IMR-90 (cell line): ENCODE measurements at regions of chr7 and their contacts with region 1.

Region 1: GRCh38 chr7:143263266-143264195 is at the start of gene GSTK1:
- DNase-seq: peak; percentile 54
- ATAC-seq: peak; percentile 99
- H3K4me3 ChIP-seq: peak within 1 kb of the TSS; percentile 97
- H3K27ac ChIP-seq: peak within 1 kb of the TSS; percentile 97
- H3K4me1 ChIP-seq: peaks cover 2% of the 10 kb centered on the region
- H3K27me3 ChIP-seq: no peaks in the 10 kb centered on the region
- CTCF ChIP-seq: no peak
- POLR2A ChIP-seq: no peak
- RAD21 ChIP-seq: no peak
- total RNA-seq, gene GSTK1: 60.0 and 64.9 TPM in 2 replicates

Region 2: DNA sequence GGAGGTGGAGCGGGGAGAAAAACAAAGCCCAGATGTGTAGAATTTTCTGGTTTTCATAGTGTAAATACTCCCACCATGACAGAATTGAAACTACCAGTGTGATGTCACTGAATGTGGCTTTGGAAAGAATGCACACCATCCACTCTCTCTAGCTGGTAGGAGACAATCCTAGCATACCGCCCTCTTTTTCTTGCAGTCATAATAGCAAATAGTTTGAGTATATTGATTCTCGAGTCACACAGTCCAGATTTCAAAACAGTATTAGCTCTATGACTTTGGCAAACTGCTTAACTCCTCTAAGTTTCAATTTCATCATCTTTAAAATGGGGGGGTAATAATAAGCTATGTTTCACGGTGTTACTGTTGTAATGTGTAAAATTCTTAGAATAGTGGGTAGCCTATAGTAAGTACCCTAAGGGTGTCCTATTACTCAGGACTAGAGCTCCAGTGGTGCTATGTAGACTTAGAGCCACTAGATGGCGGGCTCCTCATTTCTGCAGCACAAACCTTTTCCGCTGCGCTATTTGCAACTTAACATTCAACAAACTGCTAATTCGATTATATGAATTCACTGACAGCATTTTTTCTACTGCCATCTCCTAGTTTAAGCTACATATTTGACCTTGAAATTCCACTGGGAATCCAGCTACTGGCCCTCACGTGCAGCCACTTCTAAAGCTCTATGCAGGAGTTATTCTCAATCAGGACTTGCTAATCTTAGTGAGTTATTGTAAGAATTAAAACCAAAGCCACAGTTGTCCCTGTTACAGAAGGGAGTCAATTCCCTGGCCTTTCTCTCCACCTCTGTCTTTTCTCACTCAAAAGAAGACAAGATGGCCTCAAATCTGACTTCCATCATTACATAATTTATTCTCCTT is 23.0 kb before region 1 on chr7:
- CTCF ChIA-PET with region 1: interaction called, 10 read pairs
- POLR2A ChIA-PET with region 1: interaction called, 6 read pairs
- dilution Hi-C with region 1: no loop called
- in situ Hi-C with region 1: no loop called
- intact Hi-C with region 1: no loop called
- DNase-seq: peak; percentile 86
- ATAC-seq: peak; percentile 95
- H3K4me3 ChIP-seq: no peak overlapping the region
- H3K27ac ChIP-seq: no peak overlapping the region
- H3K4me1 ChIP-seq: peaks cover 4% of the 10 kb centered on the region; the same call in 1 of the 2 replicates
- H3K27me3 ChIP-seq: peaks cover 4% of the 10 kb centered on the region; the same call in 1 of the 2 replicates
- CTCF ChIP-seq: peak; percentile 91
- POLR2A ChIP-seq: no peak
- RAD21 ChIP-seq: peak; percentile 89

Region 3: DNA sequence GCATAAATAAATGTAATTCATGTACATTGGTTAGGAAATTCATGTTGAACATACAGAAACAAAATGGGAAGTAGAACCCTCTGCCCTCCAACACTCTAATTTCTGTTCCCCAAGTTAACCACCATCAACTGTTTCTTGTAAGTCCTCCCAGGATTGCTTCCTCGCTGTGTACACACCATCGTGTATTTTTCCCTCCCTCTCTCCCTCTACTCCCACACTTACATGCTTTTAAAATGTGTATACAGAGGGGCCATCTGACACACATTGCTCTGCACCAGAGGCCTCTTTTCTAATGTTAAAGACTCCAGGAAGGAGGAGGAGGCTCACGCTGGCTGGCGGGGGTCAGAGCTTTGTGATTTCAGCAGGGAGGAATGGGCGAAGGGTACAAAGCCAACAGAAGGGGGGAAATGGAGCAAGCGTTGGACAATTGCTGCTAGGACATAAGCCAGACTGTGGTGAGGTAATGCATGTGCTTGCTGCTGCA is 147.0 kb after region 1 on chr7:
- CTCF ChIA-PET with region 1: interaction called, 3 read pairs
- POLR2A ChIA-PET with region 1: no interaction called
- dilution Hi-C with region 1: no loop called
- in situ Hi-C with region 1: no loop called
- intact Hi-C with region 1: loop called (anchors 5 kb)
- DNase-seq: peak; percentile 72
- ATAC-seq: peak; percentile 76
- H3K4me3 ChIP-seq: no peak overlapping the region
- H3K27ac ChIP-seq: no peak overlapping the region
- H3K4me1 ChIP-seq: peaks cover 12% of the 10 kb centered on the region; the same call in 1 of the 2 replicates
- H3K27me3 ChIP-seq: no peaks in the 10 kb centered on the region; the same call in 1 of the 2 replicates
- CTCF ChIP-seq: no peak
- POLR2A ChIP-seq: no peak
- RAD21 ChIP-seq: no peak